ENCODE measurements at regions of chr19 and their contacts with region 1.

Region 1: DNA sequence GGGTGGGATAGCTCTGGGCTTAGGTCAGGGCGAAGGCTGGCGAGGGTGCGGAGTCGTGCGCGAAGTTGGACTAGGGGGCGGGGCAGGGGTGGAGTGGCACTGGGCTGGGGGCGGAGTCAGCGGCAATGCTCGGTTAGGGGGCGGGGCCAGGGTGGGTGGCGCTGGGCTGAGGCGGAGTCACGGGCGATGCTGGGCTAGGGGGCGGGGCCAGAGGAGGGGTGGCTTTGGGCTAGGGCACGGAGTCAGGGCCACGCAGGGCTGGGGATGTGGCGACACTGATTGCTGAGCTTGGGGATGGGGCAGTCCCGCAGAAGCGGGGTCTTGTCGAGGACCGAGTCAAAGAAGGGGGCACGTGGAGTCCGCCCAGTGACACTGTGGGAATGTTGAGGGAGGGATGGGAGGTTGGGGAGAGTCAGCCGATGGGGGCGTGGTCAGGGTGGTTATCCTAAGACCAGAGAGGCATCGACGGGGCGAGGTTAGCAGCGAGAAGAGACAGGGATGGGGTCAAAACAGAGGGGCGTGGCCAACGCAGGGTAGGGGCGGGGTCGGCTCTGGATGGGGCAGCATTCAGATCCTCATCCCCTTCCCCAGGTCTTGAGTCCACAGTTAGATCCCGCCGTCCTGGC is 8.7 kb downstream of the HOMER3 start:
- DNase-seq: peak; percentile 67
- H3K4me3 Mint-ChIP-seq: peak overlapping the region; percentile 73
- H3K27ac Mint-ChIP-seq: no peak overlapping the region
- H3K4me1 Mint-ChIP-seq: peaks cover 5% of the 10 kb centered on the region
- H3K27me3 Mint-ChIP-seq: peaks cover 8% of the 10 kb centered on the region

Region 2: DNA sequence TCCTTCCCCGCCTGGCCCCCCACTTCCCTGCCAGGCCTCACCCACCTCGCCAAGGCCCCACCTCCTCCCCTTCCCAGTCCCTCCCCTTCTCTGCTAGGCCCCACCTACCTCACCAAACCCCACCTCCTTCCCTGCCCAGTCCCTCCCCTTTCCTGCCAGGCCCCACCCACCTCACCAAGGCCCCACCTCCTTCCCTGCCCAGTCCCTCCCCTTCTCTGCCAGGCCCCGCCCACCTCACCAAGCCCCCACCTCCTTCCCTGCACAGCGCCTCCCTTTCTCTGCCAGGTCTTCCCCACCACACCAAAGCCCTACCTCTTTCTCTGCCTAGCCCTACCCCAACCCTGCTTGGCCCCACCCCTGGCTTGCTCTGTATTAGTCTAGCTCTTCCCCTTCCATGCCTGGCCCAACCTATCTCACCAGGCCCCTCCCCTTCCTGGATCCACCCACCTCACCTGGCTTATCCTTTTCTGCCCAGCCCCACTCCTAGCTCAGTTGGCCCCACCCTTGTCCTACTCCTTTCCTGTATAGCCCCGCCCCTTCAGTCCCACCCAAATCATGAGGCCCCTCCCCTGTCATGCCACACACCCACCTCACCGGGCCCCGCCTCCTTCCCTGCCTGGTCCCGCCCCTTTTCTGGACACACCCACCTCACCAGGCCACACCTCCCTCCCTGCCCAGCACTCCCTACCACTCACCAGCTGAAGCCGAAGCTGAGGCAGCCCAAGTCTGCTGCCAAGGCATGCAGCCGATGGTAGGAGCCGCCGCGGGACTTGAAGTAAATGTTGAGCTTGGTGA is 52.6 kb before region 1 on chr19:
- intact Hi-C with region 1: loop called (anchors 1 kb)
- DNase-seq: peak; percentile 5
- H3K4me3 Mint-ChIP-seq: no peak overlapping the region
- H3K27ac Mint-ChIP-seq: no peak overlapping the region
- H3K4me1 Mint-ChIP-seq: no peaks in the 10 kb centered on the region
- H3K27me3 Mint-ChIP-seq: no peaks in the 10 kb centered on the region

Region 3: DNA sequence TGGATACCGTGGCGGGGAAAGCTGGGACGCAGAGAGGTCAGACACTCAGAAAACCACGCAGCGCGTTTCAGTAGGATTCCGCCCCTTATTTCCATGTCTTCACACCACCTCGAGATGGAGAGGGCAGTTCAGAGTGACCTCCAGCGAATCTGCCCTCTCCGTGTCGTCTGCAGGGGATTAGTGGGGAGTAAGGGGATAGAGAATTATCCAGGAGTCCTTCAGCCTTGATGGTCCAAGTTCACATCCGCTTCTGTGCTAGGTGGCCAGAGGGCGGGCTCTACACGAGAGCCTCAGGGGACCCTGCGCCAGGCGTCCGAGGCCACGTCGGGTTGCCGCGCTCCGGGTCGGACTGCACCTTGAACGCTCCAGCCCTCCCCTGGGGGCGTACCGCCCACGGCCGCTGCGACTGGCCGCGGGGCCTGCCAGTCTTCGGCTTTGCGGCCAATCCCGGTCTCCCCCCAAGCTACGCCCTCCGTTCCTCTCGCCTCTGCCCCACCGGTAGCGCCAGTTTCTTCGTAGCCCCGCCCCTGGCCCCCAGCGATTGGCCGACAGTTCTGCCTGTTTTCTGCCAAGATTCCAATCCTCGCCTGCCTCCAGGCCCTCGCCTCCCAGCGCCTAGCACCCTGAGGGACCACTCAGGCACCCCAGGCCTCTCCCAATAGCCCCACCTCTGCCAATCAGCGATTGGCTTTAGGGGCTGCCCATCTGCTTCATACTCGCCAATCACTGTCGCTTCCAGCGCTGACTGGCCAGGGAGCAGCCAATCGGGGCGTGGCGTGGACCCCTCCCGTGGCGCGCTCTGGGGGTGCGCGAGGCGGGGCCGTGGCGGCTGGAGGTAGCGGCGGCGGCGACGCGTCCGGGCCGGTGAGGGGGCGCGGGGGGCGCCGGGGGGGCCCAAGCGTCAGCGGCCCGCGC is 131.1 kb after region 1 on chr19 and contains the start of gene SLC25A42:
- intact Hi-C with region 1: loop called (anchors 1 kb)
- DNase-seq: peak; percentile 99
- H3K4me3 Mint-ChIP-seq: peak within 1 kb of the TSS; percentile 84
- H3K27ac Mint-ChIP-seq: peak within 1 kb of the TSS; percentile 62
- H3K4me1 Mint-ChIP-seq: peaks cover 29% of the 10 kb centered on the region
- H3K27me3 Mint-ChIP-seq: no peaks in the 10 kb centered on the region
- total RNA-seq, gene SLC25A42: 7.8 and 10.8 TPM in 2 replicates

Measured in activated T-helper 1 cell treated with anti-CD3 and anti-CD28 coated beads, Interleukin-12 subunit alpha, Interleukin-12 subunit beta, Interleukin-2, Interleukin-4 antibody, amounts not matched to agents 30 ng/mL and 10 ng/mL and 1 ng/mL, durations not matched to agents 14 hours and 24 hours and 36 hours (primary cell).